ENCODE measurements at regions of chr12 and their contacts with region 1.

Region 1: DNA sequence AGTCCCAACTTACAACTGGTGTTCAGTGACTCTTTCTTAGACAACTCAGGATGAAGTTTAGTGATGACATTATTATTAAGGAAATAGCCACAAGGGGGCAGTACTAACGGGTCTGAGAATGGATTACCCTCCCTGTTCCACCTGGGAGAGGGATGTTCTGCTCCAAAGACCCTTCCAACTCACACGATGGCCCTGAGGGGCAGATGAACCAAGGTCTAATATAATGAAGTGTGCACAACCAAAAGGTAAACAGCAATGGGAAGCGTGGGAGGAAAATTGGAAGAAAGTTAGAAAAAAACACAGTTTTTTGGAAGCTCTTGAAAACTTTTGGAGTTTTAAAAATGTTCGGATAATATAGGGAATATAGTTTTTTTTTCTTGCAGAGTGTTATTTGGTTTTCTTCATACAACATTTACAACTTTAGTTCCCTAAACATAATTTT is 24.0 kb downstream of the FGF6 start:
- DNase-seq: peak; percentile 35
- H3K4me3 Mint-ChIP-seq: no peak overlapping the region
- H3K27ac Mint-ChIP-seq: no peak overlapping the region
- H3K4me1 Mint-ChIP-seq: peaks cover 3% of the 10 kb centered on the region
- H3K27me3 Mint-ChIP-seq: peaks cover 29% of the 10 kb centered on the region

Region 2: GRCh38 chr12:4431866-4432265 is 10.3 kb after region 1 on chr12:
- CTCF ChIA-PET with region 1: interaction called, 13 read pairs
- DNase-seq: no peak
- H3K4me3 Mint-ChIP-seq: no peak overlapping the region
- H3K27ac Mint-ChIP-seq: no peak overlapping the region
- H3K4me1 Mint-ChIP-seq: no peaks in the 10 kb centered on the region
- H3K27me3 Mint-ChIP-seq: peaks cover 33% of the 10 kb centered on the region

Region 3: DNA sequence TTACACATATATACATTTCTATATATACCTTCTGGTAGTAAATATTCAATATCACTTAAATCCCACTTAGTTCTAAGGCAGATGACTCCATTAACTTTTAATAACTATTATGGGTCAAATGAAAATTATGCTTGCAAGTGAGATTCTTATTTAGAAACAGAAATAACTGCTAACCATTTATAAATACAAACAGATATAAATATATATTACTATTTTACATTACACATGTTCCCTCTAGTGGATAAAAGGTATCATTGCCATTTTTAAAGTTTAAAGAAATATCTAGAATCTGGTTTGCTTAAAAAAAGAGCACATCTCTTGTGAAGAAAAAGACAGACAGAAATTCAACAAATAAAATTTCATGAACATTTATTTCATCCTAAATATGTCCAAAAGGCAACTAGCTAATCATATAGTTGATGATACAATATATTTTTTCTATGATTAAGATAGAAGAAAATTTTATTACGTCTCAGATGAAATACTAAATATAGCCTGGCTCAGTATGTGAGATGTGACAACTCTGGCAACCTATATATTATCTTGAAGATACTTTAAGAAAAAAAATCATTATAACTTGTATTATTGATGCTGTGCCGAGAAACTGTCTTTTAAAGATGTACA is 105.4 kb after region 1 on chr12:
- CTCF ChIA-PET with region 1: interaction called, 19 read pairs
- DNase-seq: no peak
- H3K4me3 Mint-ChIP-seq: no peak overlapping the region
- H3K27ac Mint-ChIP-seq: no peak overlapping the region
- H3K4me1 Mint-ChIP-seq: peaks cover 3% of the 10 kb centered on the region
- H3K27me3 Mint-ChIP-seq: no peaks in the 10 kb centered on the region

Region 4: GRCh38 chr12:4847713-4848112 is 426.1 kb after region 1 on chr12:
- CTCF ChIA-PET with region 1: no interaction called
- DNase-seq: no peak
- H3K4me3 Mint-ChIP-seq: no peak overlapping the region
- H3K27ac Mint-ChIP-seq: no peak overlapping the region
- H3K4me1 Mint-ChIP-seq: no peaks in the 10 kb centered on the region
- H3K27me3 Mint-ChIP-seq: peaks cover 43% of the 10 kb centered on the region

Measured in activated naive CD4-positive, alpha-beta T cell treated with anti-CD3 and anti-CD28 coated beads, Interleukin-2, amount 10 ng/mL, durations not matched to agents 7 days and 5 days (primary cell).